ENCODE measurements at regions of chr9 and their contacts with region 1.

Region 1: GRCh38 chr9:2132484-2133082 is 117.4 kb downstream of the SMARCA2 start:
- H3K4me3 Mint-ChIP-seq: no peak overlapping the region
- H3K27ac Mint-ChIP-seq: no peak overlapping the region
- H3K4me1 Mint-ChIP-seq: peaks cover 15% of the 10 kb centered on the region
- H3K27me3 Mint-ChIP-seq: no peaks in the 10 kb centered on the region

Region 2: GRCh38 chr9:2181792-2182191 is 49.2 kb after region 1 on chr9:
- intact Hi-C with region 1: loop called (anchors 1 kb)
- H3K4me3 Mint-ChIP-seq: no peak overlapping the region
- H3K27ac Mint-ChIP-seq: no peak overlapping the region
- H3K4me1 Mint-ChIP-seq: no peaks in the 10 kb centered on the region
- H3K27me3 Mint-ChIP-seq: no peaks in the 10 kb centered on the region

Measured in dendritic cell treated with granulocyte-macrophage colony-stimulating factor and Interleukin-4, amounts not matched to agents 40 ng/mL and 50 ng/mL, for 4 days (primary cell).